ENCODE measurements at regions of chr7 and their contacts with region 1.

Region 1: DNA sequence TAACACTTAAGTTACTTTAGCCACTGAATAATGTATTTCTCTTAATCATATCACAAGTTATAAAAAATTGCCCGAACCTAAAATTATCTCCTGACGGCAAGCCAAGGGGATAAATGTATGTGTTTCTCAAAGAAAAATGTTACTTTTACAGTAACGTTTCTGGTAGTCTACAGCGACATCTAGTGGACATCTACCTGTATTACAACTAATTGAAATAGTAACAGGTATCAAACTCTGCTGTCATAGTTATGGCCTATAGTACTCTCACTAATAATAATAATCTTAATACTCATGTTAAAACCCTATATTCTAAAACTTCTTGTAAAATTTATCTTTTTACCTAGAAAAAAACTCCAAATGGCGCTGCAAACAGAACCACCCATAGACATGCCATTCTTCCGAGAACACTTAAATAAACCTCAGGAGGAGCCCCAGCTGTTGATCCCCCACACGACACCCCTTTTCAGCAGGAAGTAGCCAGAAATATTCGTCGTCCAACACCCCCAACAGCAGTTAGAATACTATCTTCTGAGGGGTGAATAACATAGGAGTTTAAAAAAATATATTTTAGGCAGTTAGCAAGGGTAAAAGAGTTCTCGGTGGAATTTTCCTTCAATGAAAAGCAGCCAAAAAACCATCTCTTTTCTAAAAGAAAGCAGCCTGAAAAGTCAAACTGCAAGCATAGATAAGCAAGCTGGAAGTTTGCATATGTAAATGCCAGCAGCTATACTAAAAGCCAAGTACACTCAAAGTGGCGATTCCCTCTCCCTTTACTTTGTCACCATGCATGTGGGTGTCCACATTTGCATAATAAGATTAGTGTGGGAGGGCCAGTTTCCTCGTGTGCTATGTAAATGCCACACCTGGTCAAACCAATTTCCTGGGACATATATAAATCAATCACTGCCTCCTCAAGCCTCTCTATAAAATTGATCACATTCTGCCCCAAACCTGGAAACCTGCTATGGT is 40.5 kb upstream of the ZNF107 start:
- DNase-seq: no peak
- H3K4me3 ChIP-seq: no peak overlapping the region
- H3K27ac ChIP-seq: no peak overlapping the region
- H3K4me1 ChIP-seq: no peaks in the 10 kb centered on the region
- H3K27me3 ChIP-seq: no peaks in the 10 kb centered on the region
- CTCF ChIP-seq: peak; percentile 44 to 89 (median 63)
- POLR2A ChIP-seq: no peak

Region 2: DNA sequence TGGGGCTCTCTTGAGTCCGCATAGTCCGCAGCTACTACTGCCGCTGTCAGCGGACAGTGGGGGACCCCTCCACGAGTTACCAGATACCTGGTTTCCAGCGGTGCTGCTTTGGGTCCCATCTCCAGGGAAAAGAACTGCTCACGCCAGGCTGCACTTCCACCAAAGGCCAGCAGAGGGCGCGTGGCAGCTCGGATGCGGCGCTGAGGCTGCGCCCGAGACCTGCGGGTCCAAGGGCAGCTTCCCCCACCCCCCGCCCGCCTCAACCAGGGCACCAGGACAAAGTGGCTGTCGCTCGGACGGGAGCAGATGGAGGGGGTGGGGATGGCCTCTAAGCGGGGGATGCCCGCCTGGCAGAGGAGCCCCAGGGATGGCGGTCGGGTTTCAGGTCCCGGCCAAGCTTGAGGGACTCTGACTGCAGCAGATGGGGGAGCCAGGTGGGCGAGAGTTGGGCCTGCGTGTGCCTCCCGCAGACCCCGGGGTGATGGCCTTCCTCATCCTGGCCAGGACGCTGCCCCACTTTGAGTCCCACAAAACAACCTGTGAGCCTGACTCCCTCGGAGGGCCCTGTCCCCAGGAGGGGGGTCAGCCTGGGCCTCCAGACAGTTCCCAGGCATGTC is 442.2 kb before region 1 on chr7:
- intact Hi-C with region 1: loop called (anchors 10 kb)
- DNase-seq: peak; percentile 75
- H3K4me3 ChIP-seq: peak overlapping the region in 1 of 2 donors; percentile 47
- H3K27ac ChIP-seq: no peak overlapping the region
- H3K4me1 ChIP-seq: no peaks in the 10 kb centered on the region
- H3K27me3 ChIP-seq: no peaks in the 10 kb centered on the region
- CTCF ChIP-seq: peak; percentile 72 to 95 (median 77)
- POLR2A ChIP-seq: no peak

Region 3: DNA sequence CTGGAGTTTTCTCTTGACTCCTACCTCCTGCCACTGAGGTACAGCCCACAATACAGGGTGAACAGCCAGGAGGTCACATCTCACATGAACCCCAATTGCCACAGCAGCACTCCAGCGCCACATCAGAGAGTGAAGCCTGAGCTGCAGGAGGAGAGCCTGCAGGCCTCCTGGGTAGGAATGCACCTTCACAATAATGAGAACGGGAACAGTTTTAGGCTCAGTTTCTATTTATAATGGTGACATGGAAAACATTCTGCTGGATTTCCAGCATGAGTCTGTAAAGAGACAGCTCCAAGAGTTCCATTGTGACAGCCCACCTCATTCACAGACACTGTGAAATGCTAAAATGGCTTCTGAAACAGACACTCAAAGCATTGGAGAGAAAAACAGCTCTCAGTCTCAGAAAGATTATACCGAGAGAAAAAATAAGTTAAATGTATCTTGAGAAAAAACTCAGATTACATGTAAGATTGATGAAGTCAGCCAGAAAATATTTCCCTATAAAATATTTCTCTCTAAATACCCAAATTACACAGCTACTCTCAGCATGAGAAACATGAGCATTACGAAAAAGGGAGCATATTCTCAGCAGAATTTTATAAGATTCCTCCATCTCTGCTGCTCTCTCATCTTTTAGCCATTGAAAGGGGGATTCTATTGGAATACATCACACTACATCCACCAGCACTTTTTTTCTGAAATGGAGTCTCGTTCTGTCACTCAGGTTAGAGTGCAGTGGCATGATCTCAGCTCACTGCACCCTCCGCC is 73.8 kb before region 1 on chr7:
- intact Hi-C with region 1: no loop called
- DNase-seq: no peak
- H3K4me3 ChIP-seq: no peak overlapping the region
- H3K27ac ChIP-seq: no peak overlapping the region
- H3K4me1 ChIP-seq: no peaks in the 10 kb centered on the region
- H3K27me3 ChIP-seq: no peaks in the 10 kb centered on the region
- CTCF ChIP-seq: no peak
- POLR2A ChIP-seq: no peak

Region 4: DNA sequence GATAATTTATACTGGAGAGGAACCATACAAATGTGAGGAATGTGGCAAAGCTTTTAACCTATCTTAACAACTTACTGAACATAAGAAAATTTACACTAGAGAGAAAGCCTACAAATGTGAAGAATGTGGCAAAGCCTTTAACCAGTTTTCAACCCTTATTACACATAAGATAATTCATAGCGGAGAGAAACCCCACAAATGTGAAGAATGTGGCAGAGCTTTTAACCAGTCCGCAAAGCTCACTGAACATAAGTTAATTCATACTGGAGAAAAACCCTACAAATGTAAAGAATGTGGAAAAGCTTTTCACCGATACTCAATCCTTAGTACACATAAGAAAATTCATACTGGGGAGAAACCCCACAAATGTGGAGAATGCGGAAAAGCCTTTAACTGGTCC is 206.7 kb after region 1 on chr7:
- intact Hi-C with region 1: no loop called
- DNase-seq: no peak
- H3K4me3 ChIP-seq: no peak overlapping the region
- H3K27ac ChIP-seq: no peak overlapping the region
- H3K4me1 ChIP-seq: no peaks in the 10 kb centered on the region
- H3K27me3 ChIP-seq: no peaks in the 10 kb centered on the region
- CTCF ChIP-seq: no peak
- POLR2A ChIP-seq: no peak